ENCODE measurements at regions of chr3 and their contacts with region 1.

Region 1: DNA sequence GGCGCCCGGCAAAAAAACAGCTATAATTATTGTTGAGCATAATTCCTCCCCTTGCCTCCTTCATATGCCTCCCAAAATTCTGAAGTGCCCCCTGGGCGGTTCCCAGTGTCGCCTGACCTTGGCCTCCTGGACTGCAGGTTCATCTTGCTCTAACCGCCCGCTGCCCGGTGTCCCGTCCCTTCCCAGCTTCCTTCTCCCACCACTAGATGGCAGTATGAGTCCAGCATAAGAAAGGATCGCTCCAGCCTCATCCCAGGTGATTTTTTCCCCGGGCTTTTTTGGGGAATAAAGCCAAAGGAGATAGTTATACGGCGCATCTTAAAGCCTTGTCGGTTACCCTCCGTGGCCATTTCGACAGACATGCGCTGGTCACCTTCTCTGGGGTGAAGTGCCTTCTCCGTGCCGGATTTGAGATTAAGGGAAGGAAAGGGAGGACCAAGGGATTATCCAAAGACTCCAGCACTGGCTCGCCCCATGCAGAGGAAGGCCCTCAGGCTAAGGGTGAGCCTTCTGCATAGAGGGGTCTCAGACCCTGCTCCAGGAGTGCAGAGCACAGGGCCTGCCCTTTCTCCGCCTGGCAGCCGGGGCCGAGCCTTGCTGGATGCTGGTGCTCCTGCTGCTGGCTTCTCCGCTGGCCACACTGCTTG is 45.8 kb upstream of the TRA2B start:
- DNase-seq: no peak
- H3K4me3 ChIP-seq: peak overlapping the region in 1 of 4 donors; percentile 24
- H3K27ac ChIP-seq: no peak overlapping the region
- H3K4me1 ChIP-seq: peaks cover 6 to 11% (median 8%) of the 10 kb centered on the region in 4 donors
- H3K27me3 ChIP-seq: peaks cover 0 to 5% (median 0%) of the 10 kb centered on the region in 4 donors
- CTCF ChIP-seq: peak; percentile 88 to 95 (median 90)
- EP300 ChIP-seq: no peak
- POLR2A ChIP-seq: no peak

Region 2: GRCh38 chr3:185900226-185900625 is 83.4 kb before region 1 on chr3:
- intact Hi-C with region 1: no loop called
- DNase-seq: no peak
- H3K4me3 ChIP-seq: no peak overlapping the region
- H3K27ac ChIP-seq: no peak overlapping the region
- H3K4me1 ChIP-seq: no peaks in the 10 kb centered on the region
- H3K27me3 ChIP-seq: no peaks in the 10 kb centered on the region
- CTCF ChIP-seq: no peak
- EP300 ChIP-seq: no peak
- POLR2A ChIP-seq: no peak

Region 3: GRCh38 chr3:186241910-186242821 is 258.5 kb after region 1 on chr3:
- intact Hi-C with region 1: loop called (anchors 10 kb)
- DNase-seq: no peak
- H3K4me3 ChIP-seq: peak overlapping the region; percentile 2 to 41 (median 20)
- H3K27ac ChIP-seq: peak overlapping the region; percentile 48 to 69 (median 54)
- H3K4me1 ChIP-seq: peaks cover 20 to 40% (median 23%) of the 10 kb centered on the region in 4 donors
- H3K27me3 ChIP-seq: no peaks in the 10 kb centered on the region
- CTCF ChIP-seq: peak in 2 of 3 experiments; percentile 32 to 40
- EP300 ChIP-seq: no peak
- POLR2A ChIP-seq: no peak

Region 4: GRCh38 chr3:186540221-186540834 is 556.7 kb after region 1 on chr3:
- intact Hi-C with region 1: loop called (anchors 2 kb)
- DNase-seq: peak; percentile 93
- H3K4me3 ChIP-seq: peak overlapping the region in 3 of 4 donors; percentile 15 to 34 (median 30)
- H3K27ac ChIP-seq: peak overlapping the region in 3 of 4 donors; percentile 19 to 62 (median 49)
- H3K4me1 ChIP-seq: peaks cover 12 to 21% (median 19%) of the 10 kb centered on the region in 4 donors
- H3K27me3 ChIP-seq: no peaks in the 10 kb centered on the region
- CTCF ChIP-seq: peak; percentile 71 to 83 (median 77)
- EP300 ChIP-seq: no peak
- POLR2A ChIP-seq: no peak

Region 5: DNA sequence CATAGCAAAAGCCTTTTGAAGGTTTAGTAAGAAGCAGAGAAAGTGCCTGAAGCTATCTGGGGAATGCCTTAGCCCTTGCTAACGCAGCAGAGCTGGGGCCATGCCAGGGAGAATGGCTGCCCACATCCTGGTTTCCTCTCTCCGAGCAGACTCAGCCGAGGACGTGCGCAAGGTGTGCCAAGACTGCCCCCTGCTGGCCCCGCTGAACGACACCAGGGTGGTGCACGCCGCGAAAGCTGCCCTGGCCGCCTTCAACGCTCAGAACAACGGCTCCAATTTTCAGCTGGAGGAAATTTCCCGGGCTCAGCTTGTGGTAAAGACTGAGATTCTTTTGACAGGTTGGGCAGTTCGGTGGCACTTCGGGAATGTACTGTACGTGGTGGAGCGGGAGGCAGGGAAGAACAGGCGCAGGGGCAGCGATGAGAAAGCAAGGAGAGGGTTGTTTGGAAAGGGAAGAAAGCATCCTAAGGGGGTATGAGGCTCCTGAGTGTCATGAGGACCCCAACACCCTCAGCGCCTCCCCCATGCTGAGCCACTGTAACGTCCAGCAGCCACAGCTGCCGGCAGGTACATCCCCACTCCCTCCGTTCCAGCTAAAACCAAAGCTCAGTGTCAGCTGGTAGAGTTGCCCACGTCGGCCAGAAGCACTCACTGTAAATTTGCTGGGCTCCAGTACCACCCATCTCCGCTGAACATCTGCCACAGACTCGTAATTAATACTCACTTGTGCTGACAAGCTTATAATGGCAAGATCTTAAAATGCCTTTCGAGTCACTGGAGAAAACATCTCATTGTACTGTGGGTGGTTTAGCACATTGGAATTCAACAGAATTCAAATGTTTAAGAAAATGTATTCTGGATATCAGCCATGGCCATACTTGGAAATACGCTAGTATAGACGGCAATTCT is 633.7 kb after region 1 on chr3:
- intact Hi-C with region 1: loop called (anchors 2 kb)
- DNase-seq: no peak
- H3K4me3 ChIP-seq: peak overlapping the region in 3 of 4 donors; percentile 6 to 32 (median 22)
- H3K27ac ChIP-seq: no peak overlapping the region
- H3K4me1 ChIP-seq: peaks cover 0 to 18% (median 12%) of the 10 kb centered on the region in 4 donors
- H3K27me3 ChIP-seq: peaks cover 0 to 57% (median 0%) of the 10 kb centered on the region in 4 donors
- CTCF ChIP-seq: peak; percentile 83 to 92 (median 87)
- EP300 ChIP-seq: no peak
- POLR2A ChIP-seq: no peak

Region 6: GRCh38 chr3:186821429-186822367 is 838.1 kb after region 1 on chr3:
- intact Hi-C with region 1: loop called (anchors 5 kb)
- DNase-seq: no peak
- H3K4me3 ChIP-seq: no peak overlapping the region
- H3K27ac ChIP-seq: no peak overlapping the region
- H3K4me1 ChIP-seq: peaks cover 5 to 22% (median 16%) of the 10 kb centered on the region in 4 donors
- H3K27me3 ChIP-seq: peaks cover 0 to 25% (median 17%) of the 10 kb centered on the region in 4 donors
- CTCF ChIP-seq: peak; percentile 52 to 69 (median 60)
- EP300 ChIP-seq: no peak
- POLR2A ChIP-seq: no peak

Measured in esophagus muscularis mucosa (tissue), 4 donors.